ENCODE measurements at regions of chr1 and their contacts with region 1.

Region 1: DNA sequence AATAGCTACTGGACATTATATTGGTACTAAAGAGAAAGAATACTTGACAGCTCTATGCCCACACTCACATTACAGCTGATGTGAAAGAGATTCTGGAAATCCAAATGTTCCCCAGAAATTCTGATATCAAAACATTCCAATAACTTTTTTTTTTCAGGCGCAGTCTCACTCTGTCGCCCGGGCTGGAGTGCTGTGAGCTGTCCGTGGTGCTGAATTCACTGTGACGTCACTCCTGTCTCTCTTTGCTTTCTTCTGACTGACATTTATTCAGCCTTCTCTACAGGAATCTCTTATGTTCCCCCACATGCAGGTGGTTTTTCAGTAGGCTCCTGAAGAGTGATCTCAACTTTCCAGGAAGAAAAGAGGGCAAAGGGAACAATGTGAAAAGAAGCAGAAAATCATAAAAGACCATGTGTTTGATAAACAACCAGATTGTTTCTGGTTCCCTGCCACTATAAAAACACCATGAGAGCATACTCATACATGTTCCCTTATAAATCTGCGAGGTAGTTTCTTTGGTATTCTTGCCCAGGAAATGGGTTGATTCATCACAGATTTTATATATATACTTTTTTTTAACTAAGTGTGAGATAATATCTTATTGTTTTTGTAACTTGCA is 6.2 kb downstream of the S100A7A start:
- DNase-seq: peak; percentile 84
- H3K4me3 Mint-ChIP-seq: no peak overlapping the region
- H3K27ac Mint-ChIP-seq: no peak overlapping the region
- H3K4me1 Mint-ChIP-seq: no peaks in the 10 kb centered on the region
- H3K27me3 Mint-ChIP-seq: peaks cover 27% of the 10 kb centered on the region

Region 2: DNA sequence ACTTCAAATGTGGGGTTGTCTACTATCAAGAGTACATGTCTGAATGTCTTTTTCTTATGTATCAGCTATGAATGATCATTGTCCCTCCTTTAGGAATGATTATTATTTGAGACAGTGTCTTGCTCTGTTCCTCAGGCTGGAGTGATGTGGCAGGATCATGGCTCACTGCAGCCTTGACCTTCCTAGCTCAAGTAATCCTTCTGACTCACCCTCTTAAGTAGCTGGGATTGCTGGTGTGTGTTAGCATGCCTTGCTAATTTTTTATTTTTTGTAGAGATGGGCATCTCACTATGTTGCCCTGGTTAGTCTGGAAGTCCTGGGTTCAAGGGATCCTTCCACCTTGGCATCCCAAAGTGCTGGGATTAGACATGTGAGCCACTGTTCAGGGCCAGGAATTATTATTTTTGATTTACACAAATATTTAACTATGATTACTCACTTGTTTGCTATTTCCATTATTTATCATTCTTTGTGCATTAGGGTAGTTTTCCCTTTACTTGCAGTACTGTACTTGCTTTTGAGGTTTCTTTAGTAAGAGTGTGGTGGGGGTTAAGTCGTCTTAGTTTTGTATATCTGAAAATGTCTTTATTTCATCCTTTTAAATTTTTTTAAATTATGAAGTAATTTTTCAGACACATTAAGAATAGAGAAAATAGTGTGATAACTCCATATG is 25.1 kb after region 1 on chr1:
- CTCF ChIA-PET with region 1: no interaction called
- intact Hi-C with region 1: loop called (anchors 1 kb)
- DNase-seq: no peak
- H3K4me3 Mint-ChIP-seq: no peak overlapping the region
- H3K27ac Mint-ChIP-seq: no peak overlapping the region
- H3K4me1 Mint-ChIP-seq: no peaks in the 10 kb centered on the region
- H3K27me3 Mint-ChIP-seq: peaks cover 29% of the 10 kb centered on the region

Region 3: GRCh38 chr1:153510984-153511410 is 88.4 kb after region 1 on chr1:
- CTCF ChIA-PET with region 1: no interaction called
- intact Hi-C with region 1: no loop called
- DNase-seq: peak; percentile 90
- H3K4me3 Mint-ChIP-seq: no peak overlapping the region
- H3K27ac Mint-ChIP-seq: peak overlapping the region; percentile 36
- H3K4me1 Mint-ChIP-seq: peaks cover 8% of the 10 kb centered on the region
- H3K27me3 Mint-ChIP-seq: no peaks in the 10 kb centered on the region

Measured in activated naive CD4-positive, alpha-beta T cell treated with anti-CD3 and anti-CD28 coated beads for 36 hours (primary cell).